Calu3 (cell line): ENCODE measurements at regions of chr20 and their contacts with region 1.

Region 1: GRCh38 chr20:49594143-49594930 is 26.4 kb upstream of the PTGIS start:
- DNase-seq: peak; percentile 53
- H3K4me3 Mint-ChIP-seq: no peak overlapping the region
- H3K27ac Mint-ChIP-seq: no peak overlapping the region
- H3K4me1 Mint-ChIP-seq: peaks cover 65% of the 10 kb centered on the region
- H3K27me3 Mint-ChIP-seq: no peaks in the 10 kb centered on the region
- CTCF ChIP-seq: no peak

Region 2: GRCh38 chr20:49534255-49534712 is 60.1 kb before region 1 on chr20:
- CTCF ChIA-PET with region 1: no interaction called
- intact Hi-C with region 1: no loop called
- DNase-seq: peak; percentile 82
- H3K4me3 Mint-ChIP-seq: no peak overlapping the region
- H3K27ac Mint-ChIP-seq: no peak overlapping the region
- H3K4me1 Mint-ChIP-seq: no peaks in the 10 kb centered on the region
- H3K27me3 Mint-ChIP-seq: peaks cover 66% of the 10 kb centered on the region
- CTCF ChIP-seq: peak; percentile 90

Region 3: DNA sequence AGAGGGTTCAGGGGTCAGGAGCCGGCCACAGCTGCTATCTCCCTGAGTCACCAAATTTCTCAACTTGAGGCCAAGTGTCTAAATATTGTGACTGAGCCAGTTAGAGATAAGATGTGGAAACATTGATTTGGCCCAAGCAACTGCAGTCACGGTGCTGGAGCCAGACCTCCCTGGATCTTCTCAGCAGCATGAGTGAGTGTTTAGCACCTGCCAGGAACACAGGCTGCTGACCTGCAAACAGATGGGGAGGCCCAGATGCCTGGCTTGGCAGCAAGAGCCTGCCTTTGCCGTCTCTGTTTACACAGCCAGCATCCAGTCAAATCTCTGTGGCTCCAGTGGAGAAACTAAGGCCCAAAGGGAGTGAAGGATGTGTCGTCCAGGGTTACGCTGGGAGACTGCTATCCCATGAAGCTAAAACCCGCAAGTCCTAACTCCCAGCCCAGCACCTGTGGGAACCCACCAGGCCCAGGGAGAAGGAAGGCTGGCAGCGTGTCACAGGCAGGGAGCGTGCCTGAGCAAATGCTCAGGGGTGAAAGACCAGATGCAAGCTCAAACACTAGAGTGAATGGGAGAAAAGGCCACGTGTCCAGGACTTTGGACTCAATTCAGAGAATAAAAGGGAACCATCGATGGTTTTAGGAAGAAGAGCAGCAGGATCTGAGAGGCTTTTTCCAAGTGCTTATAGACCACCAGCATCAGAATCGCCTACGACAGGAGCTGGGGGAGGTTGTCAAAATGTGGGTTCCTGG is 10.5 kb before region 1 on chr20:
- CTCF ChIA-PET with region 1: interaction called, 13 read pairs
- intact Hi-C with region 1: no loop called
- DNase-seq: peak; percentile 87
- H3K4me3 Mint-ChIP-seq: peak overlapping the region; percentile 49
- H3K27ac Mint-ChIP-seq: peak overlapping the region; percentile 92
- H3K4me1 Mint-ChIP-seq: peaks cover 62% of the 10 kb centered on the region
- H3K27me3 Mint-ChIP-seq: no peaks in the 10 kb centered on the region
- CTCF ChIP-seq: no peak

Region 4: DNA sequence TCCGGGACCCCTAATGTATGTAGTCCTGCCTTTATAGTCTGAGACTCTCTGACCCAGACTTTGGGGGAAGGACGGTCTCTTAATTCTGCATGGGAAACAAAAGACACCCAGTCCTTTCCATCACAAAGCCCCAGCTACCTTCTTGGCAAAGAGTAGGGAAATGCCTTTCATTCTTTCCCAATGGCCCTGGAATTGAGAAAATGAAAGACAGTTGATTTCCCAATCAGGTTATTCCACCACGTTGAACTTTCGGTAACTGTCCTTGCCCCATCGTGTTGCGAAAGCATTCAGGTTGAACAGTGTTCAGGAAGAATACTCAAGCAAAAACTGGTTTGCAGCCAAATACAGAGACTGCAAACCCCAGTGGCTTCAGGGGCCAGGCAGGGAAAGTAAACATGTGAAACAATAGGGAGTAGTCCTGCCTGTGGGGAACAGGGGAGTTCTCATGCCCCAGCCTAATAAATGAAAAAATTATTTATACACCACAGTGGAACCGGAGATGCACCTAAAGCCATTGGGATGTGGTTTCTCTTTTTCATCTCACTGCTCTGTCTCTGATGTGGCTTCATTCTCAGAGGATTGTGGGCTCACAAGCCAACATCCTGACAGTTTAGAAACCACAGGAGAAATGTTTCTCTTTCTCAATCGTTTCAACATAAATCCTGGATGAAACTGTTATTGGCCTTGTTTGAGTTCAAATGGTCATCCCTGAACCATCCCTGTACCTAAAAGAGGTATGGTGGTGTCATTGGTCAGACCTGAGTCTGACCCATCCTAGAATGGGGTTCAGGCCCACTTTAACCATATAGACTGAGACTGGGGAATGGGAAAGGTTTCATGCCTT is 174.1 kb after region 1 on chr20:
- CTCF ChIA-PET with region 1: no interaction called
- intact Hi-C with region 1: no loop called
- DNase-seq: peak; percentile 83
- H3K4me3 Mint-ChIP-seq: peak overlapping the region; percentile 62
- H3K27ac Mint-ChIP-seq: peak overlapping the region; percentile 97
- H3K4me1 Mint-ChIP-seq: peaks cover 72% of the 10 kb centered on the region
- H3K27me3 Mint-ChIP-seq: no peaks in the 10 kb centered on the region
- CTCF ChIP-seq: no peak